ENCODE measurements at regions of chr3 and their contacts with region 1.

Region 1: DNA sequence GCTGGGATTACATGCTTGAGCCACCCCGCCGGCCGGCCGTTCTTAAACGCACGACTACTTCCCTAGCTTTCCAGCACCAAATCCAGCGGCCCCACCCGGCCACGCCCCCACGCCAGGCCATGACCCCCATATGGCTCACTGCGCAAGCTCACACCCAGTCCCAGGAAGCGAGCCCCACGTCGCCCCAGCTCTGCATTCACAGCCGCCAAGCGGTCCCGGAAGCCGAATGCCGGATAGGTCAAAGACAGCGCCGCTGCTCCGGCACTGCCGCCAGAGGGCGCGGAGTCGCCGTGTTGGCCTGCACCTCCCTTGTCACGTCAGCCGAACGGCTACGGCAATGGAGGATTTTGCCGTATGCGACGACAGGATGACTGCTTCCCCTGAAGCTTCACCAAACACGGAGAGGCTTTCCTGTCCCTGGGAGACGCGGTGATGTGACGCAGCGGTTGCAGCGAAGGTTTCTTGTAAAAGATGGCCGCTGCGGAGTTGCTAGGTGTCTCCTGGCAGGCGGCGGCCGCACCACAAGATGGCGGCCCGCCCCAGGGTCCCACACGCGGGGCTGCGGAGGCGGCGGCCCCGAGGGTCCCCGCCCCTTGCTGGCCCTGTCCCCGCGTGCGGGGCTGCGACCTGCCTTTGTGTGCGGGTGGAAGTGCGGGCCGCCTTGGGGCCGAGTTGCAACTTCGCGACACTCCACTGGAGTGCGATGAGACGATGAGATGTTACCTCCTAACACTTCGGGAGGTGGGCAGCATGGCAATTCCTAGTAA is 30.2 kb upstream of the RPN1 start:
- DNase-seq: peak; percentile 94 to 100 (median 97)
- ATAC-seq: peak; percentile 85
- H3K4me3 ChIP-seq: peak overlapping the region; percentile 70
- H3K4me3 Mint-ChIP-seq: peak overlapping the region; percentile 97
- H3K27ac ChIP-seq: peak overlapping the region; percentile 88 to 96
- H3K27ac Mint-ChIP-seq: peak overlapping the region; percentile 94
- H3K4me1 ChIP-seq: peaks cover 34% of the 10 kb centered on the region
- H3K4me1 Mint-ChIP-seq: peaks cover 40% of the 10 kb centered on the region
- H3K27me3 ChIP-seq: no peaks in the 10 kb centered on the region
- H3K27me3 Mint-ChIP-seq: no peaks in the 10 kb centered on the region
- CTCF ChIP-seq: peak; percentile 92

Region 2: DNA sequence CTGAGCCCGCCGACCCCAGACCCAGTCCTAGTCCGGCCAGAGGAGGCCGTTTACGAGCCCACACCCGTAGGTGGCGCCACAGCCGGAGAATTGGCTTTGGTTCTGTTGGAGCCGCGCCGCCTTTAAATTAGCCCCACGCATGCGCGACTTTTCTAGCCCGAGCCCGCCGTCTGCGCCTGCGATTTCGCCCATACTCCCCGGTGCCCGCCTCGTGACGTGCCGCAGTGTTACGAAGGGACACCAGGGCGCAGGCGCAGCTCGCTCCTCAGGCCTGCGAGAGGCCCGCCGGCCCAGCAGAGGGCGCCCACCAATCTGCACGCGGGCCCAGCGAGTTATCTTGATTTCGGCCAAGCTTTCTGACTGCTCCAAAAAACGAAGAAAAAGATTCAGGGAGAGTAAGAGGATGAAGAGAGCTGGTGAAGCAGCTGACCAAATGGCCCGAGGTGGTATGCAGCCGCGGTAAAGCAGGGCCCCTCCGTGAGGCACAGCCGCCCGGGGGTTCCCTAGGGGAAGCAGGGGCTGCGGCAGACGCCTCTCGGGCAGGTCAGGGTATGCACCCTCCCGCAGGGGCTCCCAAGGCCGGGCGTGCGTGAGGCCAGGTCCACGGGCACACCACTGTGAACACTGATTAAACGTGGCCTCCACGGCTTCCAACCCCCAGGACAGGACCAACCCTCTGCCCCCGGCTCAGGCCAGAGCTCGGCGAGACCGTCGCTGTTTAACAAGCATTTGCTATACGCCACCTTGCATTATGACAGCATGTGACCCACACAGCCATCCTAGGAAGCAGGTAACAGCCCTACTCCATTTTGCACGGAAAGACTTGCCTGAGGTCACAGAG is 63.0 kb before region 1 on chr3:
- CTCF ChIA-PET with region 1: interaction called, 21 read pairs
- POLR2A ChIA-PET with region 1: interaction called, 31 read pairs
- intact Hi-C with region 1: loop called (anchors 2 kb)
- DNase-seq: peak; percentile 94 to 100 (median 99)
- ATAC-seq: peak; percentile 92
- H3K4me3 ChIP-seq: peak overlapping the region; percentile 99
- H3K4me3 Mint-ChIP-seq: peak overlapping the region; percentile 98
- H3K27ac ChIP-seq: peak overlapping the region; percentile 89 to 91
- H3K27ac Mint-ChIP-seq: peak overlapping the region; percentile 96
- H3K4me1 ChIP-seq: peaks cover 28% of the 10 kb centered on the region
- H3K4me1 Mint-ChIP-seq: peaks cover 29% of the 10 kb centered on the region
- H3K27me3 ChIP-seq: no peaks in the 10 kb centered on the region
- H3K27me3 Mint-ChIP-seq: no peaks in the 10 kb centered on the region
- CTCF ChIP-seq: peak; percentile 96

Region 3: GRCh38 chr3:128665362-128666038 is 15.3 kb before region 1 on chr3:
- CTCF ChIA-PET with region 1: interaction called, 6 read pairs
- POLR2A ChIA-PET with region 1: interaction called, 10 read pairs
- intact Hi-C with region 1: no loop called
- DNase-seq: no peak
- ATAC-seq: no peak
- H3K4me3 ChIP-seq: no peak overlapping the region
- H3K4me3 Mint-ChIP-seq: no peak overlapping the region
- H3K27ac ChIP-seq: no peak overlapping the region
- H3K27ac Mint-ChIP-seq: no peak overlapping the region
- H3K4me1 ChIP-seq: no peaks in the 10 kb centered on the region
- H3K4me1 Mint-ChIP-seq: no peaks in the 10 kb centered on the region
- H3K27me3 ChIP-seq: no peaks in the 10 kb centered on the region
- H3K27me3 Mint-ChIP-seq: no peaks in the 10 kb centered on the region
- CTCF ChIP-seq: no peak

Region 4: DNA sequence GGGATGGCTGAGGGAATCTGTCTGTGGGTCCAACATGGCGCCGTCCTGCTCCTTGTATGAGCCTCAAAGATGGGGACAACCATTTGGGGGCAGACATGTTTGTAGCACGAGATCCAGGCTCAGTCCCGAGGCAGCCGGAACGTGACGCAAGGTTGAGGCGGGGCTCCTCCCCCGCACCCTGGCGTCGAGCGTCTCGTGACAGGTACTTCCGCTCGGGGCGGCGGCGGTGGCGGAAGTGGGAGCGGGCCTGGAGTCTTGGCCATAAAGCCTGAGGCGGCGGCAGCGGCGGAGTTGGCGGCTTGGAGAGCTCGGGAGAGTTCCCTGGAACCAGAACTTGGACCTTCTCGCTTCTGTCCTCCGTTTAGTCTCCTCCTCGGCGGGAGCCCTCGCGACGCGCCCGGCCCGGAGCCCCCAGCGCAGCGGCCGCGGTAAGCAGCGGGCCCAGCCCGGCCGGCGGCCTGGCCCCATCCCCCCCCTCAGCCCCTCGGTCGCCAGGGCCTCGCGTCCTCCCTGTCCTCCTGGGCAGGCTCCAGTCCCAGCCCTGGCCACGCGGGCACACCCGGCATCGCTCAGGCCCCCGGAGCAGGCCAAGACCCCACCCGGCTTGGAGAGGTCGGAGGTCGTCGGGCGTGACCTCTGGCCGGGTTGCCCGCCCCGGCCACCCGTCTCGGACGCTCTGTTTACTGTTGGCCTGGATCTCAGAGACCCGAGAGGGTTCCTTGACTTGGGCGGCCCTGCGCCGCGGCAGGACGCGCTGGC is 45.3 kb after region 1 on chr3 and contains the start of gene RAB7A:
- CTCF ChIA-PET with region 1: interaction called, 30 read pairs
- POLR2A ChIA-PET with region 1: interaction called, 38 read pairs
- intact Hi-C with region 1: loop called (anchors 1 to 2 kb)
- DNase-seq: peak; percentile 94 to 99 (median 97)
- ATAC-seq: peak; percentile 98
- H3K4me3 ChIP-seq: peak within 1 kb of the TSS; percentile 77
- H3K4me3 Mint-ChIP-seq: peak within 1 kb of the TSS; percentile 100
- H3K27ac ChIP-seq: peak within 1 kb of the TSS; percentile 64 to 78
- H3K27ac Mint-ChIP-seq: peak within 1 kb of the TSS; percentile 97
- H3K4me1 ChIP-seq: peaks cover 47% of the 10 kb centered on the region
- H3K4me1 Mint-ChIP-seq: peaks cover 57% of the 10 kb centered on the region
- H3K27me3 ChIP-seq: no peaks in the 10 kb centered on the region
- H3K27me3 Mint-ChIP-seq: no peaks in the 10 kb centered on the region
- CTCF ChIP-seq: no peak
- total RNA-seq, gene RAB7A: 113 to 121 TPM

Region 5: DNA sequence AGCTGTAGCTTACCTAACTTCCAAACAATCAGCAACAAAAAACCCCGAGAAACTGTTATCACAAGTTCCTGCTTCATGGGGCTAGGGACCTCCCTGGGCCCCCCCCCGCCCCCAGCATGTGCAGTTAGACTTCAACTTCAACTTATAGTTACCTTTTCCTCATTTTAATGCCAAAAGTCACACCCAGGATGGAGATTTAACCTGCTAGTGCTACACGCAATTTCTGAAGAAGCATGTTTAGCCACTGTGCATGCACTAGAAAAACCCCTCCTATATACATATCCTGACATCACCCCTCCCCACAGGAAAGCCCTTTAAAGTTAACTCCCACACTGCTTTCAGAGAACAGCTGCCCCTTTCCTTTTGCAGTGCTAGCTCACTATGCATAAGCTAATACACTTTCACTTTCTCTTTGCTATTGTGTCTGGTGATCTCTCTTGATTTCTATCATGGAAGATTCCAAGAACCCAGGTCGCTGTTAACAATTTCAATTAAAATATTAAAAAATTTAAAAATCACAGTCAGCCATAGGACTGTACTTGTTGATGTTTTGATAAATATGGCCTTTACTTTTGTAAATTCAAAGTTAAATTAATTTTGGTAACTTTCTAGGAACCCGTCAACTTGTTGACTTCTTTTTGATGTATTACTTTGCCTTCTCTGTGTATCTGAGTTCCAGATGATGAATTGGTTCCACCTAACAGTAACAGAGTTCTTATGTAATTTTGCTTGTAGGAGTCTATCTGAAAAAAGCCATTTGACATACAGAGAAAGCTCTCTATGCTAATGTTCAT is 123.4 kb after region 1 on chr3:
- CTCF ChIA-PET with region 1: interaction called, 28 read pairs
- POLR2A ChIA-PET with region 1: interaction called, 83 read pairs
- intact Hi-C with region 1: loop called in 1 of 2 experiments (anchors 1 kb)
- DNase-seq: peak in 11 of 14 experiments; percentile 26 to 93 (median 44)
- ATAC-seq: peak; percentile 92
- H3K4me3 ChIP-seq: peak overlapping the region; percentile 44
- H3K4me3 Mint-ChIP-seq: peak overlapping the region; percentile 75
- H3K27ac ChIP-seq: peak overlapping the region; percentile 86 to 87
- H3K27ac Mint-ChIP-seq: peak overlapping the region; percentile 96
- H3K4me1 ChIP-seq: peaks cover 50% of the 10 kb centered on the region
- H3K4me1 Mint-ChIP-seq: peaks cover 81% of the 10 kb centered on the region
- H3K27me3 ChIP-seq: no peaks in the 10 kb centered on the region
- H3K27me3 Mint-ChIP-seq: no peaks in the 10 kb centered on the region
- CTCF ChIP-seq: no peak

Region 6: DNA sequence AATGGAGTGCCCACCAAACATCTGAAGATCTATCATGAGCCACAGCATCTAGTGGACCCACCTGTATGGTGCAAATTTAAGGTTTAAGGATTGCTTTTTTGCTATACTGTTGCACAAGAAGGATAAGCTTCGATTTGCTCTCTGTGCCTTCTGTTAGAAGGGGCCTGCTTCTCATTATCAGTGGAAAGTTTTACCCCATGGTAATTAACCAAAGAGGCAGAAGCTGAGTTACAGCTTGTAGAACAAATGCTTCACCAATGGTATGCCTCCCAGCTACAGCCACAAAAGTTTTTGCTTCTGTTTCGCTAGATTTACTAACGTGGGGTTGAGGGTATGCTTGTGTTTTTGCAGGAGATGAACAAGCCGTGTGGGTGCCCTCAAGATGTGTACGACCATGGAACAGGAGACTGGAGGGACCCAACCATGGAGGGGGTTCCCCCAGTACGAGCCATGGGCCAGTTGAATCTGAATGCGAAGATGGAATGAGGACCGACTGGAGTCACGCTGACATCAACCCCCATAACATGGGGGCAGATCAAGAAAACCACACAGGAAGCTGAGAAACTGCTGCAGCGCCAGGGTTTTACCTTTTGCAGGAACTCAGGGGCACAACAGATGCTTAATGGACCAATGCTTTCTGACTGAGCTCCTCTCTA is 242.1 kb after region 1 on chr3:
- CTCF ChIA-PET with region 1: interaction called, 7 read pairs
- POLR2A ChIA-PET with region 1: interaction called, 22 read pairs
- intact Hi-C with region 1: loop called in 1 of 2 experiments (anchors 2 kb)
- DNase-seq: peak; percentile 26 to 72 (median 44)
- ATAC-seq: peak; percentile 74
- H3K4me3 ChIP-seq: peak overlapping the region; percentile 43
- H3K4me3 Mint-ChIP-seq: peak overlapping the region; percentile 78
- H3K27ac ChIP-seq: peak overlapping the region in 1 of 2 donors; percentile 22
- H3K27ac Mint-ChIP-seq: peak overlapping the region; percentile 88
- H3K4me1 ChIP-seq: peaks cover 27% of the 10 kb centered on the region
- H3K4me1 Mint-ChIP-seq: peaks cover 43% of the 10 kb centered on the region
- H3K27me3 ChIP-seq: no peaks in the 10 kb centered on the region
- H3K27me3 Mint-ChIP-seq: no peaks in the 10 kb centered on the region
- CTCF ChIP-seq: no peak

Measured in CD4-positive, alpha-beta T cell (primary cell).